Prostate gland (tissue), 2 donors: ENCODE measurements at regions of chr2 and their contacts with region 1.

Region 1: DNA sequence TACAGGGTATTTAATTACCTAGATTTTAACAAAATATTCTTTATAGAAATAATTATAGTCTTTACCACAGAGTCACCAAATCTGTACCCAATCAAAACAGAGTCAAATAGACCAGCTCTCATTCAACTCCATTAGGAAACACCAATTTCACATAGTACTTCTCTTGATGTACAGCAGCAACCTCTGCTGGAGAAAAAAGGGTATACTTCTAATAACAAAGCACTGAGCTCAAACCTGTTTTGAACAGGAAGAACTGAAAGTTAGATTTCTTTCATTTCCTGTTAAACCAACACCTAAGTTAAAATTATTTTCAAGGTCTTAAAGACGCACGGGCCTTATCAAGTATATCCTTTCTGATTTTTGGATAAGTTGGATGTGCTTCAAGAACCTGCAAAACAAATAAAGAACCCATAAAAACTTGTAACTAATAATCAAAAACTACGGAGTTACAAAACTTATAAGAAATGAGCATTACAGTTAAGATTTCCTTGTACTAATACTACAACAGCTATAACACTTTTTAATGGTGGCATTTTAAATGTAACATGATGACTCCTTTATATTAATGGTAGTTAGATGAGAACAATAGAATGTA is 79.0 kb downstream of the TTC21B start:
- DNase-seq: peak; percentile 27
- H3K4me3 ChIP-seq: no peak overlapping the region
- H3K27ac ChIP-seq: no peak overlapping the region
- H3K4me1 ChIP-seq: no peaks in the 10 kb centered on the region
- H3K27me3 ChIP-seq: no peaks in the 10 kb centered on the region
- CTCF ChIP-seq: peak; percentile 32 to 88 (median 72)
- POLR2A ChIP-seq: no peak

Region 2: DNA sequence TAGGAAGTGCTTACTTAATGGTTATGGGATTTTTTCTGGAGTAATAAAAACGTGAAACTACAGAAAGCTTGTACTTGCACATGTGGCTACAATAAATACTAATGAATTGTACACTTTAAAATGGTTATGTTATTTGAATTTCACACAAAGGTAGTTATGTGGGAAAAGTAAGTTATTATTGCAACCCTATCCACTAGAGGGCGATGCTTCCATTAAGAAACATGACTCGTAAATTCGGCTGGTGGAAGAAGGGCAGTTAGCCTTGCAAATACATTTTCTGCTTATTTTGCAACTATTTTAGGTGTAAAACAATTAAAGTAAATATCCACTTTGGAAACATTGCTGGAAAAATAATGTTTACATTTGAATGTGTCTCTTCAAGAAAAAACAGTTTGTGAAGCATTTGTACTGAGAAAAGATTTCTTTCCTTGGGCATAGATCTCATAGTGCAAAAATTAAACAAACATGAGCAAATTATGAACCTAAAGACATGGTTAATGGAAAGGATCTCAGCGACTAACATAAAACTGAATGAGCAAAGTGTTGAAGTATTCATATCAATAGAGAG is 473.2 kb before region 1 on chr2:
- intact Hi-C with region 1: loop called (anchors 5 kb)
- DNase-seq: peak; percentile 42
- H3K4me3 ChIP-seq: no peak overlapping the region
- H3K27ac ChIP-seq: no peak overlapping the region
- H3K4me1 ChIP-seq: no peaks in the 10 kb centered on the region
- H3K27me3 ChIP-seq: no peaks in the 10 kb centered on the region
- CTCF ChIP-seq: peak; percentile 55 to 84 (median 71)
- POLR2A ChIP-seq: no peak

Region 3: GRCh38 chr2:165691615-165692014 is 182.9 kb before region 1 on chr2:
- intact Hi-C with region 1: loop called (anchors 5 kb)
- DNase-seq: no peak
- H3K4me3 ChIP-seq: no peak overlapping the region
- H3K27ac ChIP-seq: no peak overlapping the region
- H3K4me1 ChIP-seq: no peaks in the 10 kb centered on the region
- H3K27me3 ChIP-seq: no peaks in the 10 kb centered on the region
- CTCF ChIP-seq: no peak
- POLR2A ChIP-seq: no peak